Naive thymus-derived CD4-positive, alpha-beta T cell (primary cell): ENCODE measurements at regions of chr10 and their contacts with region 1.

Region 1: GRCh38 chr10:101840741-101841453 is 2.7 kb downstream of the KCNIP2 start:
- DNase-seq: peak; percentile 35 to 83 (median 58)
- ATAC-seq: peak; percentile 76
- H3K4me3 ChIP-seq: peak overlapping the region; percentile 55
- H3K4me3 Mint-ChIP-seq: peak overlapping the region; percentile 72 to 91 (median 85)
- H3K27ac ChIP-seq: no peak overlapping the region
- H3K27ac Mint-ChIP-seq: peak overlapping the region in 5 of 9 donors; percentile 50 to 87 (median 79)
- H3K4me1 ChIP-seq: peaks cover 13 to 36% of the 10 kb centered on the region in 2 donors
- H3K4me1 Mint-ChIP-seq: peaks cover 34 to 65% (median 55%) of the 10 kb centered on the region in 7 donors
- H3K27me3 ChIP-seq: no peaks in the 10 kb centered on the region
- H3K27me3 Mint-ChIP-seq: peaks cover 0 to 19% (median 4%) of the 10 kb centered on the region in 5 donors

Region 2: GRCh38 chr10:101050208-101051069 is 790.5 kb before region 1 on chr10:
- CTCF ChIA-PET with region 1: no interaction called
- POLR2A ChIA-PET with region 1: no interaction called
- intact Hi-C with region 1: no loop called
- DNase-seq: peak; percentile 60 to 88 (median 74)
- ATAC-seq: peak; percentile 93
- H3K4me3 ChIP-seq: no peak overlapping the region
- H3K4me3 Mint-ChIP-seq: peak overlapping the region in 7 of 10 donors; percentile 10 to 63 (median 55)
- H3K27ac ChIP-seq: no peak overlapping the region
- H3K27ac Mint-ChIP-seq: no peak overlapping the region
- H3K4me1 ChIP-seq: peaks cover 5 to 9% of the 10 kb centered on the region in 2 donors
- H3K4me1 Mint-ChIP-seq: peaks cover 13 to 30% (median 15%) of the 10 kb centered on the region in 7 donors
- H3K27me3 ChIP-seq: peaks cover 7 to 8% of the 10 kb centered on the region in 2 donors
- H3K27me3 Mint-ChIP-seq: peaks cover 38 to 54% (median 49%) of the 10 kb centered on the region in 5 donors

Region 3: DNA sequence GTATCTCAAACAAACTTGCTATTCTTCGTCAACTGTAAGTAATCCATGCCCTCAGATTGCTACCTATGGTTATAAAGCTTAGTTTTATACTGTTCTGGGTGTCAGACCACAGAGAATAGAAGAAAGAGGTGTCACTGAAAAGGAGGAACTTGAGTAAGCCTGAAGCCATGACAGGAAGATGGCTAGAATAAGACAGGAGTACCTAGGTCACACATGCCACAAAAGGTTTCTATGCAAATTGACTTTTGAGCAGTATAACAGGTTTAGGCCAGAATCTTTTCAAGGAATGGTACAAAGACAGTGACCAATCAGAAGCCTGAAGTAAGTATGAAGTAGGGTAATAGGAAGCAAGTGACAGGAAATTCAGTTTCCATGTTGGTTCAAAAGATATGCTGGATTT is 169.4 kb before region 1 on chr10:
- CTCF ChIA-PET with region 1: no interaction called
- POLR2A ChIA-PET with region 1: no interaction called
- intact Hi-C with region 1: no loop called
- DNase-seq: no peak
- ATAC-seq: no peak
- H3K4me3 ChIP-seq: no peak overlapping the region
- H3K4me3 Mint-ChIP-seq: no peak overlapping the region
- H3K27ac ChIP-seq: no peak overlapping the region
- H3K27ac Mint-ChIP-seq: no peak overlapping the region
- H3K4me1 ChIP-seq: no peaks in the 10 kb centered on the region
- H3K4me1 Mint-ChIP-seq: peaks cover 4 to 12% (median 8%) of the 10 kb centered on the region in 7 donors
- H3K27me3 ChIP-seq: no peaks in the 10 kb centered on the region
- H3K27me3 Mint-ChIP-seq: no peaks in the 10 kb centered on the region

Region 4: DNA sequence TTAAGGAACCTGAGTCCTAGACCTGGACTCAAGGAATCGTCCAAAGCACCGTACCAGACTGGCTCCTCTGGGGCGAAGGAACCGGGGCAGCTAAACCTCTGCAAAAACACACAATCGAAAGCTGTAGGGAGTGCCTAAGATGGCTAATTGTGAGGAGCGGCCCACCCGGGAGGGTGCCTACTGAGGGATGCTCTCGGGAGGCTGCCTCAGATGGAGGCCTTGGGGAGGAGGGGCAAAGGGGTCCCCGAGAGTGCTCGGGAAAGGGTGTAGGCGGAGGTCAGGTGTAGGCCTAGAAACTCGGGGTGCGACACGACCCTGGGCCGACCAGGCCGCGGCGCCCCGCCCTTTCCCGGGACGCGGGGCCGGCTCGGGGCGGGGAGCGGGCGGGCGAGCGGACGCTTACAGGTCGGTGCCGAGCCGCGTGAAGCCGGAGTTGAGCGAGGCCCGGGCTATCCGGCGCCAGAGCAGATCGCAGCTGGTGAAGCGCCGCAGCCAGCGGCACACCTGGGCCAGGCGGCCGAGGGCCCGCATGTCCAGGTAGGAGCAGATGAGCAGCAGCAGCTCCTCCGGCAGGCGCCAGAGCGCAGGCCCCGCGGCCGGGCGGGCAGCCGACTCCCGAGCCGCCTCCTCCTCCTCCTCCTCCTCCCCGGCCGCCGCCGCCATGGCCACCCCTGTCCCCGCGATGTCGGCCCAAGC is 146.8 kb before region 1 on chr10:
- CTCF ChIA-PET with region 1: no interaction called
- POLR2A ChIA-PET with region 1: no interaction called
- intact Hi-C with region 1: loop called in 1 of 2 experiments (anchors 5 kb)
- DNase-seq: peak; percentile 60 to 81 (median 73)
- ATAC-seq: peak; percentile 77
- H3K4me3 ChIP-seq: peak overlapping the region; percentile 57
- H3K4me3 Mint-ChIP-seq: peak overlapping the region; percentile 93 to 98 (median 96)
- H3K27ac ChIP-seq: peak overlapping the region; percentile 99
- H3K27ac Mint-ChIP-seq: peak overlapping the region; percentile 94 to 100 (median 99)
- H3K4me1 ChIP-seq: peaks cover 21 to 28% of the 10 kb centered on the region in 2 donors
- H3K4me1 Mint-ChIP-seq: peaks cover 33 to 59% (median 45%) of the 10 kb centered on the region in 7 donors
- H3K27me3 ChIP-seq: no peaks in the 10 kb centered on the region
- H3K27me3 Mint-ChIP-seq: no peaks in the 10 kb centered on the region

Region 5: DNA sequence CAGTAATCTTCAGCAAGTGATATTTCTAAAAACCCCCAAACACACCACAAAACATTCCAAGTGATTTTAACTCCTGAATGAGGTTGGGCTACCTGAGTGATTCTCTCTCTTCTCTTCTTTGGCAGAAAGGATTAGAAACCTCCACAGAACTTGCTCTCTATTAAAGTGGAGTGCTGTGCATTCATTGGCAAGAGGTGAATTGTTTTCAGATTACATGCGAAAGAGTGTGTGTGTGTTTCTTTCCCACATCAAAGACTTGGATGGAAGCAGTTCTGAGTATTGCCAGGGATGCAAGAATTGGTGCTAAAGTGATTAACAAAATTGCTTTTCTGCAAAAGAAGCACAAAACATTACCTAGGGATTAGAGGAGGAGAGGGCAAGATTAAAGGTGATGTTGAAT is 132.8 kb before region 1 on chr10:
- CTCF ChIA-PET with region 1: no interaction called
- POLR2A ChIA-PET with region 1: no interaction called
- intact Hi-C with region 1: no loop called
- DNase-seq: peak in 2 of 9 donors; percentile 7 to 12
- ATAC-seq: no peak
- H3K4me3 ChIP-seq: no peak overlapping the region
- H3K4me3 Mint-ChIP-seq: peak overlapping the region in 1 of 10 donors; percentile 3
- H3K27ac ChIP-seq: no peak overlapping the region
- H3K27ac Mint-ChIP-seq: peak overlapping the region in 1 of 9 donors; percentile 1
- H3K4me1 ChIP-seq: no peaks in the 10 kb centered on the region
- H3K4me1 Mint-ChIP-seq: peaks cover 0 to 32% (median 6%) of the 10 kb centered on the region in 7 donors
- H3K27me3 ChIP-seq: no peaks in the 10 kb centered on the region
- H3K27me3 Mint-ChIP-seq: peaks cover 20 to 60% (median 33%) of the 10 kb centered on the region in 5 donors

Region 6: GRCh38 chr10:101830322-101831168 is 10.4 kb before region 1 on chr10:
- CTCF ChIA-PET with region 1: interaction called, 9 read pairs
- POLR2A ChIA-PET with region 1: interaction called, 6 read pairs
- intact Hi-C with region 1: loop called (anchors 1 kb)
- DNase-seq: peak; percentile 89 to 98 (median 95)
- ATAC-seq: peak; percentile 90
- H3K4me3 ChIP-seq: peak overlapping the region; percentile 66
- H3K4me3 Mint-ChIP-seq: peak overlapping the region; percentile 79 to 94 (median 88)
- H3K27ac ChIP-seq: peak overlapping the region; percentile 85
- H3K27ac Mint-ChIP-seq: peak overlapping the region; percentile 94 to 100 (median 99)
- H3K4me1 ChIP-seq: peaks cover 22 to 53% of the 10 kb centered on the region in 2 donors
- H3K4me1 Mint-ChIP-seq: peaks cover 41 to 59% (median 53%) of the 10 kb centered on the region in 7 donors
- H3K27me3 ChIP-seq: no peaks in the 10 kb centered on the region
- H3K27me3 Mint-ChIP-seq: peaks cover 0 to 4% (median 0%) of the 10 kb centered on the region in 5 donors

Region 7: DNA sequence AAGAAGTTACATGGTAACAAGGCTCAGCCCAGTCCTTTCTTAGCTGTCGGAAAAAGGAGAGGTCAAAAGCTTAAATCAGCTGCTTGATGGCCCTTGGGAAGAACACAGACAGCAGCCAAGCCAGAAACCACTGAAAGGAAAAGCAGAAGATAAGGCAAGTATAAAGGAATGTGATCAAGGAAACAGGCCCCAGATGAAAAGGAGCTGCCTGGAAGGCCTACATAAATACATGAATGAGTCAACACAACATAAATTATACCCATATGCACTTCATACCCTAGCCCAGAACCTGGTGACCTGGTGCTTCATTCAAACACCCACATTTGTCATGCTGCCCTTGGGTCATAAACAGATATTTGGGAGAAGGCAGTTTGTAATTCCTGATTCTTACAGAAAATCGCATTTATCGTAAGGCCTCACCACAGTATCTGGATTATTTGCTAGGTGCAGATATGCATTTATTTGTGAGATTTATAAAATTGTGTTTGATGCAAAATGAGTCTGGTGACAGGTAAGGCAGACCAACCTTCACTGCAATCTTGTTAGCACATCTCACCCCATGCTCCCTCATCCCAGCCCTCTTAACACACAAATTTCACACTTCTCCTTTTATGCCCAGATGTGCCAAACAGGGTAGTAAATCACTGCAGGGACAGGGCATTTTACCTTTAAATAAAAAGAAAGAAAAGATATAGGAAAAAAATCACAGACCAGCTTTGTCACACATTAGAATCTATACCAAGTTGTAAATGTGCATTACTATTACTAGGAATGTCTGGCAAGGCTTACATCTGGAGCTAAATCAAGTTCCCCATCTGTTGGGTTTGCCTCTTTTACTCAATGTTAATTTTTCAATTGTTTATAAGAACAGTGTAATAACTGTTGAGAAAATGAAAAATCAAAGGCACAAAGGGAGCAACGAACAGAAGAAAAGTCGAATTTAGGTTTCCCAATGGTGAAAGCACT is 97.7 kb after region 1 on chr10:
- CTCF ChIA-PET with region 1: no interaction called
- POLR2A ChIA-PET with region 1: no interaction called
- intact Hi-C with region 1: no loop called
- DNase-seq: no peak
- ATAC-seq: no peak
- H3K4me3 ChIP-seq: no peak overlapping the region
- H3K4me3 Mint-ChIP-seq: no peak overlapping the region
- H3K27ac ChIP-seq: no peak overlapping the region
- H3K27ac Mint-ChIP-seq: no peak overlapping the region
- H3K4me1 ChIP-seq: no peaks in the 10 kb centered on the region
- H3K4me1 Mint-ChIP-seq: peaks cover 6 to 26% (median 11%) of the 10 kb centered on the region in 7 donors
- H3K27me3 ChIP-seq: no peaks in the 10 kb centered on the region
- H3K27me3 Mint-ChIP-seq: no peaks in the 10 kb centered on the region

Region 8: GRCh38 chr10:102009801-102010425 is 169.0 kb after region 1 on chr10:
- CTCF ChIA-PET with region 1: interaction called, 28 read pairs
- POLR2A ChIA-PET with region 1: no interaction called
- intact Hi-C with region 1: loop called (anchors 1 kb)
- DNase-seq: peak in 8 of 9 donors; percentile 33 to 66 (median 52)
- ATAC-seq: peak; percentile 86
- H3K4me3 ChIP-seq: no peak overlapping the region
- H3K4me3 Mint-ChIP-seq: no peak overlapping the region
- H3K27ac ChIP-seq: no peak overlapping the region
- H3K27ac Mint-ChIP-seq: peak overlapping the region in 4 of 9 donors; percentile 12 to 39 (median 20)
- H3K4me1 ChIP-seq: no peaks in the 10 kb centered on the region
- H3K4me1 Mint-ChIP-seq: peaks cover 0 to 13% (median 4%) of the 10 kb centered on the region in 7 donors
- H3K27me3 ChIP-seq: no peaks in the 10 kb centered on the region
- H3K27me3 Mint-ChIP-seq: no peaks in the 10 kb centered on the region

Region 9: DNA sequence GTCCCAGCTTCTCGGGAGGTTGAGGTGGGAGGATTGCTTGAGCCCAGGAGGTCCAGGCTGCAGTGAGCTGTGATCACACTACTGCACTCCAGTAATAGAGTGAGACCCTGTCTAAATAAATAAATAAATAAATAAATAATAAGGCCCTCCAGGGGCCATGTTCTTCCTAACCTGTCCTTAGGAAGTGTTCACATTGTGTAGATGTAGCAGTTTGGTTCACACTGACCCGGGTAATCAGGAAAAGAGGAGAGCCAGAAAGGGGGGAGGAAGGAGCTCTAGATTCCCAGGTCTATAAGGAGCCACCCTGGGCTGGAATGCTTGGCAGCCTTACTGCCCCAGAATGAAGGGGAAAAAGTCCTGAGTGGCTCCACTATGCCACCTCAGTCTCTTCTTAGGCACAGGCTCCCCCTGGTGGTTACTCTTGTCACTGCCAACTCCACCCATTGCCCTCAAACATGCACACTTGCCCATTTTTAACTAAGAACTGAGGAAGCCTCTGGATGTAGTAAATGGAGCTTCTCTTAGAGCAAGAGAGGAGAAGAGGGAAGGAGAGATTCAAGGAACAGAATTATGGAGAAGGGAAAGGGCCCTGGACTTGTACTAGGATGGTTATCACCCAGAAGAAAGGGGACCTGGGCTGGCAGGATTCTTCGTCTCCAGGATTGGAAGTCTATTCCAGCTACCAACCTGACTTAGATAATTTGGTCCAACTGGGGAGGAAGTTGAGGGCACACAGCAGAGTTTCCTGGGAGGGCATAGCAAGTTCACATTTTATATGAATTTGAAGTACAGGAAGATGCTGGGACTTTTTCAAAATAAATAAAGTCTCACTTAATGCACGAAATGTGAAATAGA is 232.0 kb after region 1 on chr10:
- CTCF ChIA-PET with region 1: interaction called, 12 read pairs
- POLR2A ChIA-PET with region 1: no interaction called
- intact Hi-C with region 1: loop called (anchors 1 kb)
- DNase-seq: peak; percentile 54 to 81 (median 73)
- ATAC-seq: peak; percentile 94
- H3K4me3 ChIP-seq: no peak overlapping the region
- H3K4me3 Mint-ChIP-seq: no peak overlapping the region
- H3K27ac ChIP-seq: no peak overlapping the region
- H3K27ac Mint-ChIP-seq: peak overlapping the region in 1 of 9 donors; percentile 13
- H3K4me1 ChIP-seq: no peaks in the 10 kb centered on the region
- H3K4me1 Mint-ChIP-seq: peaks cover 0 to 17% (median 13%) of the 10 kb centered on the region in 7 donors
- H3K27me3 ChIP-seq: no peaks in the 10 kb centered on the region
- H3K27me3 Mint-ChIP-seq: no peaks in the 10 kb centered on the region